ENCODE measurements at regions of chr22 and their contacts with region 1.

Region 1: DNA sequence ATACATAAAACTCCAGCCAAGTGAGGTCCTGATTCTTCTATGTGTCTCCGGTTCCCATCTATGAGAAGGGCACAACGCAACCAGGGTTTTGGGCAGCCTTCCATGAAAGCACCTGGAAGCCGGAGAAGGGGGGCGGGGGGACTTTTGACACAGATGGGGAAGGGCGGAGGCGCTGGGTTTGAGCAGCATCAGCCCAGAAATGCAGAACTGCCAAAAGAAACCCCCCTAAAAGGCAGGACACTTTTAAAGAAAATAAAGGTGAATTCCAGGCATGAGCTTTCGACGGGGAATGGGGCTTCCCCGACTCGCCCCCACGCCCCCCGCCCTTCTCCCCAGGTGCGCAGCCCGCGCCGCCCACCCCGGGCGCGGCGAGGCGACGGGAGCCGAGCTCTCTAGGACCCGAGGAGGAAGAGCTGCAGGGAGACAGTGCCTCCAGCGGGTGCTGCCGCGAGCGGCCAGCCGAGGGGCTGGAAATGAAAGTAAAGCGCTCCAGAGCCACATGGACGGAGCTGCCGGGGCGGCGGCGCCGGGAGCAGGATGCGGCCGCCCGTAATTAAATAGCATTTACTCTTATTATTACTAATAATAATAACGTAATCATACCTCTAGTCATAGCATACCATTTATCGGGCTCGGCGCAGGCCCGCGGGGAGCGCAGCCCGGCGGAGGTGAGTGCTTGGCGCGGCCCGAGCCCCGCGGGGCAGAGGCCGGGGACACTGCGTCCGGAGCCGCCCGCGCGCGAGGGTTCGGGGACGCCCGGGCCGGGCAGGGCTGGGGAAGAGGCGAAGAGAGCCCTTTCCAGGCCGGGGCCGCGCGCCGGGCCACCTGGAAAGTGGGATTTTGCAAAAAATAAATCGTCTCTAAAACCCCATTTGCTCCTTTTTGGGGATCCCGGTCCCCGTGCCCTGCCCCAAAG is at the start of gene ZC3H7B:
- DNase-seq: peak; percentile 80 to 90
- ATAC-seq: peak; percentile 92 to 95 (median 94)
- H3K4me3 ChIP-seq: peak within 1 kb of the TSS; percentile 100
- H3K27ac ChIP-seq: peak within 1 kb of the TSS; percentile 86
- H3K4me1 ChIP-seq: peaks cover 23% of the 10 kb centered on the region
- H3K27me3 ChIP-seq: no peaks in the 10 kb centered on the region
- CTCF ChIP-seq: peak; percentile 57
- total RNA-seq, gene ZC3H7B: 32.0 to 34.1 (median 33.1) TPM

Region 2: DNA sequence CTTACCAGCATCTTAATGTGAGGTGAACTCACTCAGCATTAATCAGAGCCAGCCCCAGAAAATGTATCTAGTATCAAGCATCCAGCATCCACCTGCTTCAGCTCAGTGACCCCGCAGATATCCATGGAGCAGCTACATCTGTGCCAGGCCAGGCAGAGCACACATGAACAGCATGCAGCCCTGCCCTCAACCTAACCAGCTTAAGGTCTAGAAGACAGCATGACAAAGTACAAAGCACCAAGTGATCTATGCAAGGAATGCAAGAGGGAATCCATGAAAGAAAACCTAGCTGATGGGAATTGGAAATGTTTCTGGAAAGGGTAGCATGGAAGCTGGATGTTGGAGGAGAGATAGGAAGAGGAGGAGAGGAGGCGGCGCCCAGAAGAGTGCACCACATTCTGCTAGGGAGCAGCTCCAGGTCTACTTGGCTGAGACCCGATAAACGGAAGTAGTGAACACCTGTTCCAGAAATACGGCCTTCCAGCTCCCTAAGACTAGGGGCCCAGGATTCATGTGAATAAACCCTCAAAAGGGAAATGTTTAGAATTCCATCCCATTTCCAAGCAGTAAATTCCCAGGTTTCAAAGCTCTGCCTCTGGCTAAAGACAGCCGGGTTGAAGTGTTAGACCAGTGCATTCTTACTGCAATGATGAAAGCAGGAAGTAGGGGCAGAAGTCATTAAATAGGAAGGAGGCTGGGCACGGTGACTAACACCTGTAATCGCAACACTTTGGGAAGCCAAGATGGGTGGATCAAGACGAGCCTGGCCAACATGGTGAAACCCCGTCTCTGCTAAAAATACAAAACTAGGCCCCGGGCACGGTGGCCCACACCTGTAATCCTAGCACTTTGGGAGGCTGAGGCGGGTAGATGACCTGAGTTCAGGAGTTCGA is 119.8 kb before region 1 on chr22:
- intact Hi-C with region 1: no loop called
- DNase-seq: peak in 1 of 2 donors; percentile 74
- ATAC-seq: peak; percentile 65 to 77 (median 72)
- H3K4me3 ChIP-seq: no peak overlapping the region
- H3K27ac ChIP-seq: peak overlapping the region; percentile 78
- H3K4me1 ChIP-seq: peaks cover 35% of the 10 kb centered on the region
- H3K27me3 ChIP-seq: no peaks in the 10 kb centered on the region
- CTCF ChIP-seq: no peak

Region 3: DNA sequence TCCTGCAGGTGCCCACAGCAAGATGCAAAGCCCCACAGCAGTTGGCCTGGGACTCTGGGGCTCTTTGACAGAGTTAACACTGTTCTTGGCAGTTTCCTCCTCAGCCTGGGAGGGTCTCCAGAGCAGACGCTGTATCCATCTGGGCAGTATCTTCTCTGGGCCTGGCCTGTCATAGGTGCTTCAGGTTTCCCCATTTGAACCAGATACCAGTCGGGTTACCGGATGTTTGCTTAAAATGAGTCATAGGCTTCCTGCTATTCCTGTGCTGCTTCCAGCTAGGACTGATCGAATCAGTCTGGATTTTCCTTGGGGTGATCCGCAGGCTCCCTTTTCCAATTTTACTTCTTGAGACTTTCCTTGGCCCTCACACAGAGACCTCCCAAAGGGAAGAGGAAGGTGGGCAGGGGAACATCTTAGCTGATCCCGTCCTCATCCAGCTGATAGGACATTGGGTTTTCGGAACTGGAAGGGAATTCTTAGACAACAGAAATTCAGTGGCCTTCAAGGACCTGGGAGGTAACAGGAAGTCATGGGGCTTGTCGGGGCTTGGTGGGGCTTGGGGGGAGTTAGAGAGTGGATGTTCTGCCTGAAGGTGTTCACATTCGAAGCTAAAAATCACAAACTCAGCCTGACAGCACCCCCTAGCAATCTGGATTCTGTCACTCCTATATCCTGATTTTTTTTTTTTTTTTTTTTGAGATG is 13.0 kb before region 1 on chr22:
- intact Hi-C with region 1: loop called in 1 of 2 experiments (anchors 1 kb)
- DNase-seq: no peak
- ATAC-seq: no peak
- H3K4me3 ChIP-seq: no peak overlapping the region
- H3K27ac ChIP-seq: peak overlapping the region; percentile 54
- H3K4me1 ChIP-seq: peaks cover 8% of the 10 kb centered on the region
- H3K27me3 ChIP-seq: no peaks in the 10 kb centered on the region
- CTCF ChIP-seq: no peak

Region 4: GRCh38 chr22:41311487-41311886 is 10.1 kb after region 1 on chr22:
- intact Hi-C with region 1: no loop called
- DNase-seq: no peak
- ATAC-seq: no peak
- H3K4me3 ChIP-seq: no peak overlapping the region
- H3K27ac ChIP-seq: no peak overlapping the region
- H3K4me1 ChIP-seq: peaks cover 24% of the 10 kb centered on the region
- H3K27me3 ChIP-seq: no peaks in the 10 kb centered on the region
- CTCF ChIP-seq: no peak